HEK293 (cell line): ENCODE measurements at regions of chr1 and their contacts with region 1.

Region 1: GRCh38 chr1:28359592-28360239 is 9.8 kb upstream of the PHACTR4 start:
- H3K4me3 ChIP-seq: no peak overlapping the region
- H3K27ac ChIP-seq: no peak overlapping the region
- H3K4me1 ChIP-seq: no peaks in the 10 kb centered on the region
- CTCF ChIP-seq: 0 out of 2 replicates have a peak, but pooled peaks have one; percentile 20

Region 2: DNA sequence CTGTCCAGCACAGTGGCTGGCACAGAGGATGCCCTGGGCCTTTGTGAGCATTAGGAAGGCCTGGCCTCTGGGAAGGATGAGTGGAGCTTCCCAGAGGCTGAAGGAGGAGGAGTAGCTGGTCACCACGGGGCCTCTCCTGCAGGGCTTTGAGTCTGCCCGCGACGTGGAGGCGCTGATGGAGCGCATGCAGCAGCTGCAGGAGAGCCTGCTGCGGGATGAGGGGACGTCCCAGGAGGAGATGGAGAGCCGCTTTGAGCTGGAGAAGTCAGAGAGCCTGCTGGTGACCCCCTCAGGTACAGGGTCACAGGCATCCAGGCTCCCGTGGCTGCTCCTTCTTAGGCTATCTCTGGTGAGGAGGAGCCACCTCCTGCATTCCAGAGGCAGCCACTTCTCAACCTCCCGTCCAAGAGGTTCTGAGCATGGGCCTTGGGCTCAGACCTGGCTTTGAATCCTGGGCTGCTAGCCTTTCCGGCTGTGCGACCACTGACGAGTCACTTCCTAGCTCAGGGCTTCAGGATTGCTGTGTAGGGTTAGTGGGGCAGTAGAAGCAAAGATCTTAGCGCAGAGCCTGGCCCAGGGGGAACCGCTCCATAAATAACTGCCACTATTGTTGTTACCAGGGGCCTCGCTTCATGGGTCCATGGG is 86.4 kb before region 1 on chr1:
- CTCF ChIA-PET with region 1: no interaction called
- POLR2A ChIA-PET with region 1: no interaction called
- H3K4me3 ChIP-seq: no peak overlapping the region
- H3K27ac ChIP-seq: no peak overlapping the region
- H3K4me1 ChIP-seq: no peaks in the 10 kb centered on the region
- CTCF ChIP-seq: no peak

Region 3: DNA sequence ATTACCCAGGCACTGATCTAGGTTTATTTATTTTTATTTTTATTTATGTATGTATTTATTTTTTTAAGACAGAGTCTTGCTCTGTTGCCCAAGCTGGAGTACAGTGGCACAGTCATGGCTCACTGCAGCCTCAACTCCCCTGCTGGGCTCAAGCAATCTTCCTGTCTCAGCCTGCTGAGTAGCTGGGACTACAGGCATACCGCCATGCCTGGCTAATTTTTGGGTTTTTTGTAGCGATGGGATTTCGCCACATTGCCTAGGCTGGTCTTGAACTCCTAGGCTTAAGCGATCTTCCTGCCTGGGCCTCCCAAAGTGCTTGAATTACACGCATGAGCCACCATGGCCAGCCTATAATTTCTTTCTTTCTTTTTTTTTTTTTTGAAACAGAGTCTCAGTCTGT is 19.2 kb after region 1 on chr1:
- CTCF ChIA-PET with region 1: interaction called, 13 read pairs
- POLR2A ChIA-PET with region 1: no interaction called
- H3K4me3 ChIP-seq: no peak overlapping the region
- H3K27ac ChIP-seq: no peak overlapping the region
- H3K4me1 ChIP-seq: peaks cover 7% of the 10 kb centered on the region
- CTCF ChIP-seq: no peak

Region 4: GRCh38 chr1:28602536-28603439 is 243.1 kb after region 1 on chr1:
- CTCF ChIA-PET with region 1: interaction called, 19 read pairs
- POLR2A ChIA-PET with region 1: interaction called, 3 read pairs
- H3K4me3 ChIP-seq: no peak overlapping the region
- H3K27ac ChIP-seq: no peak overlapping the region
- H3K4me1 ChIP-seq: peaks cover 5% of the 10 kb centered on the region
- CTCF ChIP-seq: peak; percentile 47